T-cell (primary cell): ENCODE measurements at regions of chr12 and their contacts with region 1.

Region 1: GRCh38 chr12:785706-786105 is 33.3 kb downstream of the WNK1 start:
- DNase-seq: no peak
- ATAC-seq: no peak
- H3K4me3 ChIP-seq: no peak overlapping the region
- H3K4me3 Mint-ChIP-seq: no peak overlapping the region
- H3K27ac ChIP-seq: no peak overlapping the region
- H3K27ac Mint-ChIP-seq: no peak overlapping the region
- H3K4me1 ChIP-seq: peaks cover 24 to 42% of the 10 kb centered on the region in 2 experiments
- H3K4me1 Mint-ChIP-seq: peaks cover 69 to 78% (median 73%) of the 10 kb centered on the region in 3 donors
- H3K27me3 ChIP-seq: no peaks in the 10 kb centered on the region
- H3K27me3 Mint-ChIP-seq: no peaks in the 10 kb centered on the region

Region 2: DNA sequence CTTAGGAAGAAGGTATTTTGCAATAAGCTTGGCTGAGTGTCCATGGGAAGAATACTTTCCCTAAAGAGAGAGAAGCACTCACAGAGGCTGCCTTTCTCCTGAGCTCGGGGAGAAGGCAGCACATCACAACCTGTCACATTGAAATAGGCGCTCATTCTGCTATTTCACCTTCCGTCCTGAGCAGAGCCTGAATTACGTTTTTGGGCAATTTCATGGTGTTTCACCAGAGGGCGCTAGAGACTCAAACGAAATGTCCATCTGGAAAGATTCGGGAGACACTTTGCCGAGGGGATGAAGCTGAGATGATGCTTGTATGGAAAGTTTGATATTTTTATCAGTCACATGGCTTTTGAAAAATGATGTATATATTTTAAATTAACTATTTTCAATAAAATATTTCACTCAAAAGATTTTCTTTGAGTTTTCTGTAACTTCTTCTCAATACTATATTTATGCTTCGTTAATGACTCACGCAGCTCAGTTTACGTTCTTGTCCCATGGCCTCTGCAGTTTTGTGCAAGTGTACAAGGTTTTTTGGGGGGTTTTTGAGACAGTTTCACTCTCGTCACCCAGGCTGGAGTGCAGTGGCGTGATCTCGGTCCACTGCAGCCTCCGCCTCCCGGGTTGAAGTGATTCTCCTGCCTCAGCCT is 343.3 kb before region 1 on chr12:
- CTCF ChIA-PET with region 1: no interaction called
- POLR2A ChIA-PET with region 1: interaction called in 1 of 2 experiments, 10 read pairs
- DNase-seq: peak in 23 of 35 experiments; percentile 9 to 70 (median 29)
- ATAC-seq: peak in 1 of 4 experiments; percentile 26
- H3K4me3 ChIP-seq: no peak overlapping the region
- H3K4me3 Mint-ChIP-seq: no peak overlapping the region
- H3K27ac ChIP-seq: no peak overlapping the region
- H3K27ac Mint-ChIP-seq: no peak overlapping the region
- H3K4me1 ChIP-seq: no peaks in the 10 kb centered on the region
- H3K4me1 Mint-ChIP-seq: no peaks in the 10 kb centered on the region
- H3K27me3 ChIP-seq: peaks cover 0 to 2% of the 10 kb centered on the region in 2 experiments
- H3K27me3 Mint-ChIP-seq: peaks cover 0 to 4% of the 10 kb centered on the region in 2 donors

Region 3: GRCh38 chr12:998020-998874 is 212.5 kb after region 1 on chr12:
- CTCF ChIA-PET with region 1: no interaction called
- POLR2A ChIA-PET with region 1: no interaction called
- DNase-seq: no peak
- ATAC-seq: no peak
- H3K4me3 ChIP-seq: no peak overlapping the region
- H3K4me3 Mint-ChIP-seq: no peak overlapping the region
- H3K27ac ChIP-seq: no peak overlapping the region
- H3K27ac Mint-ChIP-seq: no peak overlapping the region
- H3K4me1 ChIP-seq: no peaks in the 10 kb centered on the region
- H3K4me1 Mint-ChIP-seq: peaks cover 30 to 52% (median 37%) of the 10 kb centered on the region in 3 donors
- H3K27me3 ChIP-seq: no peaks in the 10 kb centered on the region
- H3K27me3 Mint-ChIP-seq: no peaks in the 10 kb centered on the region